Lower leg skin (tissue), 4 donors: ENCODE measurements at regions of chr14 and their contacts with region 1.

Region 1: DNA sequence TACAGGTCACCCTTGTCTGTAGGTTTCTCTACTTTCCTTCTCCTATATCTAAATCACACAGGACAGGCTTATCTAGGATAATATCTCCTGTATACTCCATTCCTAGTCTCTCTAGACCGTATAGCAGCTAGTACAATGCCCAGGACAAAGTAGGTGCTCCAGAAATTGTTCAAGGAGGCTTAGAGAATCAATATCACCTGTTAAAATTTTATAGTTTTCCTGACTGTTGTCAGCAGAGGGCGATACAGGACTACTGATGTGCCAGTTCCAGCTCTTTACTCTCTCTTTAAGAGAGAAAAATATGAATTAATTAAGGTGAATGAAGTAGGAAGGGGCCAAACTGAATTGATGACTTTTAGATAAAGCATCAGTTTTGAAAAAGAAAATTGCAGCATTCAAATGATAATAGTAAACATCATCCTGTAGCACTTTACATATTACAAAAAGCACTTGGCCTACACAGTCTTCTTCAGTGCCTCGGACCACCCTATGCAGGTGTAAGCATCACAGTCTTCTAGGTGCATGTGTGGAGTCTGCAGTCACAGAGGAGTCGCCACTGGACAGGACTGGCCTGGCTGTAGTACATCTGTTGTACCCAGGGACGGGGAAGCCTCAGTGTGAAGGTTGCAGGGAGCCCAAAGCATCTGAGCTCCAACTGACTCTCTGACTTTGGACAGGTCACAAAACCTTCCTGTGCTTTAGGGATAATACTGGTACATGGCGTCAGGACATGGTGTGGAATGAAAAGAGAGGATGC is 61.9 kb upstream of the MAX start:
- DNase-seq: no peak
- H3K4me3 ChIP-seq: no peak overlapping the region
- CTCF ChIP-seq: no peak
- POLR2A ChIP-seq: no peak

Region 2: GRCh38 chr14:64952598-64953309 is 211.5 kb before region 1 on chr14:
- intact Hi-C with region 1: no loop called
- DNase-seq: peak in 1 of 2 donors; percentile 18
- H3K4me3 ChIP-seq: no peak overlapping the region
- CTCF ChIP-seq: no peak
- POLR2A ChIP-seq: no peak

Region 3: DNA sequence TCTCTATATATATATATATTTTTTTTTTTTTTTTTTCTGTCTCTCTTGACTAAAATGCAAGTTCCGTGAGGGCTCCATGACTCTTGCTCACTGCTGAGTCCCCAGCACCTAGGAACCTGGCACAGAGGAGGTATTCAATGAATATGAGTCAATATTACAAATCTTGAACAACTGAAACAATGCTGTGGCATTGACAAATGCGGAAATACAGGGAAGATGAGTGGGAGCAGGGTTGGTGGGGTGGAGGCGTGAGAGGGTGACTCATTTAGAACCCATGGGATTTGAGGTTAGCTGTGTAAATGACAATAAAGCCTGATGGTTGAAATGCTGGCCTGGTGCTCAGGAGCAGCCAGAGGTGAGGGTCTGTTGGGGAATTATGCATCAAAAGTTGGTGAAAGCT is 126.6 kb after region 1 on chr14:
- intact Hi-C with region 1: no loop called
- DNase-seq: no peak
- H3K4me3 ChIP-seq: no peak overlapping the region
- CTCF ChIP-seq: no peak
- POLR2A ChIP-seq: no peak

Region 4: DNA sequence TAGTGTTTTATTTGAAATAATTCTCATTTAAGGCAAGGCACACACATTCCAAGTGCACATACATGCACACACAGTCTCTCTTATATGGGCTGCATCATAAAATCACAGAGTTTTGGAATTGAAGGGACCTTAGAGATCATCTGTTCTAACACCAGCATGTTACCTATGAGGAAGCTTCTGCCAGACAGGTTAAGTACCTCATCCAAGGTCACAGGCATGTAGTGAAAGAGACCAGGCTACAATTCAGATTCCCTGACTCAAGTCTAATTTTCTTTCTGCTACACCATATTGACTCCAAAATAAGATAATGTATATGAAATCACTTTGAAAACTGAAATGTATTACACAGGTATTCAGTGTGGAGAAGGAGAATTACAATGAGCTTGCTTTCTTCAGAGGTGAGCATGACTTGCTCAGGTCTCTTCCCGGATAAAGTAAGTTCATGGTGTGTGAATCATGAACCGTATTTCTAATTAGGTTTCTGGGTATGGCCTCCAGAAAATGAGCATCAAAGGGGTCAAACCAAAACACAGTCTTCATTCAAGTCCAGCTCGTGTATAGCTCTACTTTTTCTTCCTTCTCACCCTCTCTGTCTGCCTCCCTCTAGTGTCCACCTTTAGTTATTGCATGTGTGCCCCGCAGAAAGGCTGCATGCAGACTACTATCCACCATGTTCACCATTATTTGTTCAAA is 660.2 kb after region 1 on chr14:
- intact Hi-C with region 1: loop called (anchors 10 kb)
- DNase-seq: peak in 1 of 2 donors; percentile 35
- H3K4me3 ChIP-seq: no peak overlapping the region
- CTCF ChIP-seq: no peak
- POLR2A ChIP-seq: no peak

Region 5: GRCh38 chr14:65958664-65959562 is 794.7 kb after region 1 on chr14:
- intact Hi-C with region 1: loop called (anchors 10 kb)
- DNase-seq: peak in 1 of 2 donors; percentile 79
- H3K4me3 ChIP-seq: no peak overlapping the region
- CTCF ChIP-seq: no peak
- POLR2A ChIP-seq: no peak